Psoas muscle (tissue), 8 donors: ENCODE measurements at regions of chr17 and their contacts with region 1.

Region 1: GRCh38 chr17:75289115-75289831 is at the start of gene SLC25A19:
- DNase-seq: peak; percentile 98 to 99
- ATAC-seq: peak; percentile 98 to 99 (median 98)
- H3K4me3 ChIP-seq: peak within 1 kb of the TSS; percentile 70
- H3K27ac ChIP-seq: peak within 1 kb of the TSS; percentile 83
- H3K4me1 ChIP-seq: peaks cover 5% of the 10 kb centered on the region
- H3K27me3 ChIP-seq: no peaks in the 10 kb centered on the region
- CTCF ChIP-seq: peak; percentile 25
- total RNA-seq, gene SLC25A19: 11.3 to 41.7 (median 16.0) TPM

Region 2: GRCh38 chr17:75194879-75195278 is 94.4 kb before region 1 on chr17:
- intact Hi-C with region 1: no loop called
- DNase-seq: no peak
- ATAC-seq: no peak
- H3K4me3 ChIP-seq: no peak overlapping the region
- H3K27ac ChIP-seq: no peak overlapping the region
- H3K4me1 ChIP-seq: no peaks in the 10 kb centered on the region
- H3K27me3 ChIP-seq: no peaks in the 10 kb centered on the region
- CTCF ChIP-seq: no peak

Region 3: GRCh38 chr17:75345514-75346167 is 56.4 kb after region 1 on chr17:
- intact Hi-C with region 1: no loop called
- DNase-seq: no peak
- ATAC-seq: no peak
- H3K4me3 ChIP-seq: no peak overlapping the region
- H3K27ac ChIP-seq: no peak overlapping the region
- H3K4me1 ChIP-seq: peaks cover 74% of the 10 kb centered on the region
- H3K27me3 ChIP-seq: no peaks in the 10 kb centered on the region
- CTCF ChIP-seq: no peak

Region 4: DNA sequence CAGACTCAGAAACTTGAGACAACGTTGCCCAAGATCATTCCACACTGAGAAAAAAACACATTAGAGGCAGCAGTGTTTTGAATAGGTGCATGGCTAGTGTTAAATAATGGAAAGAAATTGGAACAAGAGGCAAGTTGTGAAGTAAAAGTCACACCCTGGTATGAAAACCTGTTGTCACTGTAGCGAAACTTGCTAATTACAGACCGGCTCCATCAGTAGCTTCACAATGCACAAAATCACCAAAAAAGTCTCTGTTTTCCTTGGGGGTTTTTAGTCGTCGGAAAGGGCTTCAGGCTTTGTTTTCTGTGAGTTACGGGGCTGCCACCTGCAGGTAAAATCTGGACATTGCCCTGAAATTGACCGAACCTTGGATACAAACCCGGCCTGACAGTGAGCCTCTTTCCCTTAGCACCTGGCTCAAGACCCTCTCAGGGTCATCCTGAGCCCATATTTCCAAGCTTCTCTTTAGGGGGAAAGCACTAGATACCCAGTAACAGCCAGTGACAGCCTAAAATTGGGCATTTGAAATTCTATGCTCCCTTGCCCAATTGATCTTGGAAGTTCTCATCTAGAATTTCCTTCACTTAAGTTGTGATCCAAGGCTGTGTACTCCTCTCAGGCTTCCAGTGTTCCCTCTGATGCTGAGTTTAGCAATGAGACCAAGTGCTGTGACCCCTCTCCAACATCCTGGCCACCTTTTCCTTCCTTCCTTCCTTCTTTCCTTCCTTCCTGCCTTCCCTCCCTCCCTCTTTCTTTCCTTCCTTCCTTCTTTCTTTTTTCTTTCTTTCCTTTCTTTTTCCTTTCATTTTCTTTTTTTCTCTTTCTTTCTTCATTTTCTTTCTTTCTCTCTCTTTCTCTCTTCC is 123.4 kb after region 1 on chr17:
- intact Hi-C with region 1: loop called in 1 of 2 experiments (anchors 2 kb)
- DNase-seq: peak; percentile 35 to 58
- ATAC-seq: peak; percentile 59 to 88 (median 75)
- H3K4me3 ChIP-seq: peak overlapping the region; percentile 36
- H3K27ac ChIP-seq: no peak overlapping the region
- H3K4me1 ChIP-seq: no peaks in the 10 kb centered on the region
- H3K27me3 ChIP-seq: no peaks in the 10 kb centered on the region
- CTCF ChIP-seq: peak; percentile 70